ENCODE measurements at regions of chr10 and their contacts with region 1.

Region 1: GRCh38 chr10:68934994-68935393 is 21.0 kb upstream of the DDX21 start:
- DNase-seq: no peak
- ATAC-seq: no peak
- H3K4me3 ChIP-seq: no peak overlapping the region
- H3K4me3 Mint-ChIP-seq: no peak overlapping the region
- H3K27ac ChIP-seq: no peak overlapping the region
- H3K27ac Mint-ChIP-seq: no peak overlapping the region
- H3K4me1 ChIP-seq: no peaks in the 10 kb centered on the region
- H3K4me1 Mint-ChIP-seq: no peaks in the 10 kb centered on the region
- H3K27me3 ChIP-seq: no peaks in the 10 kb centered on the region
- H3K27me3 Mint-ChIP-seq: no peaks in the 10 kb centered on the region
- CTCF ChIP-seq: no peak

Region 2: GRCh38 chr10:68879627-68880026 is 55.4 kb before region 1 on chr10:
- CTCF ChIA-PET with region 1: no interaction called
- POLR2A ChIA-PET with region 1: interaction called, 18 read pairs
- intact Hi-C with region 1: no loop called
- DNase-seq: no peak
- ATAC-seq: no peak
- H3K4me3 ChIP-seq: no peak overlapping the region
- H3K4me3 Mint-ChIP-seq: no peak overlapping the region
- H3K27ac ChIP-seq: no peak overlapping the region
- H3K27ac Mint-ChIP-seq: no peak overlapping the region
- H3K4me1 ChIP-seq: no peaks in the 10 kb centered on the region
- H3K4me1 Mint-ChIP-seq: no peaks in the 10 kb centered on the region
- H3K27me3 ChIP-seq: no peaks in the 10 kb centered on the region
- H3K27me3 Mint-ChIP-seq: no peaks in the 10 kb centered on the region
- CTCF ChIP-seq: no peak

Region 3: GRCh38 chr10:68973975-68974374 is 39.0 kb after region 1 on chr10:
- CTCF ChIA-PET with region 1: no interaction called
- POLR2A ChIA-PET with region 1: no interaction called
- intact Hi-C with region 1: no loop called
- DNase-seq: no peak
- ATAC-seq: no peak
- H3K4me3 ChIP-seq: no peak overlapping the region
- H3K4me3 Mint-ChIP-seq: no peak overlapping the region
- H3K27ac ChIP-seq: no peak overlapping the region
- H3K27ac Mint-ChIP-seq: no peak overlapping the region
- H3K4me1 ChIP-seq: no peaks in the 10 kb centered on the region
- H3K4me1 Mint-ChIP-seq: no peaks in the 10 kb centered on the region
- H3K27me3 ChIP-seq: no peaks in the 10 kb centered on the region
- H3K27me3 Mint-ChIP-seq: no peaks in the 10 kb centered on the region
- CTCF ChIP-seq: no peak

Region 4: DNA sequence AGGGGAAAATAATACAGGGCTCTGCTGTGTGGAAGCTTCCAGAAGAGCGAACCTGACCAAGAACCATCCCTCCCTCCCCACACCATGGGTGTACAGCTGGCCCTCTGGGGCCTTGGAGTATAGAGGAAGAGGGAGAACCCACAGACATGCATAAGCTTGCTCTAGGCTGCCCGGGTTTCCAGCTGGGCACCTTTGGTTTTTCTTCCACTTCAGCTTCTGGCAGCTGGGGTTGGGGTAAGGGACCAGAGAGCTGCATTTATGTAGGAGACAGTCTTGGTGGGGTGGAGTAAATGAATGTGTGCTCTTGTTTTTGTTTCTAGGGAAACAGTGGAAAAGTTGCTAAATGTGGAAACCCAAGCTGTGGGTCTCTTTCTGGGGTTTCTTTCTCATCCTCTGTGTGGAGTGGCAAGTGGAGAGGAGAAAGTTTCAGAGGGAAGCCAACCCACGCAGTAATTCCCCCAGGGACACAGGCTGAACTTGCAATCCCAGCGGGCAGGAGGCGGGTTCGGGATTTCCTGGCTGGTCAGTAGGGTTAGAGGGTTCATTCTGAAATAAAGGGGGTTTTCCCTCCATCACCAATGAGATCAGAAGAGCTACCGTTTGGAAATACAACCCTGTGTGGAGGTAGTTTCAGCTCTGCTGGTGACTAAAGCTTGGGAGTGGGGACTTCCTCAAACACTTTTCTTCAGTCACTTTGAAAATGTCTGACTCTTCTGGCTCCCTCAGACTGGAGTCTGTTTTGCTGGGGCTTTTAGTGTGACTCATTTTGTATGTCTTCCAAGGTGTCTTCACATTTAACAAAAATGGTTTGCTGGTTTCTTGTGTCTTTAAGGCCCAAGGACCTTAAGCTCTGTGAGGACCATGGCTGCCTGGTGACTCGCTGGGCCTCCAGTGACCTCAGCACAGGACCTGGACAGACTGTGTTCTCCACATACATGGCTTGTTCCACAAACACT is 130.7 kb after region 1 on chr10:
- CTCF ChIA-PET with region 1: no interaction called
- POLR2A ChIA-PET with region 1: no interaction called
- intact Hi-C with region 1: no loop called
- DNase-seq: no peak
- ATAC-seq: peak; percentile 32
- H3K4me3 ChIP-seq: no peak overlapping the region
- H3K4me3 Mint-ChIP-seq: no peak overlapping the region
- H3K27ac ChIP-seq: no peak overlapping the region
- H3K27ac Mint-ChIP-seq: peak overlapping the region; percentile 42
- H3K4me1 ChIP-seq: peaks cover 6 to 17% of the 10 kb centered on the region in 2 donors
- H3K4me1 Mint-ChIP-seq: peaks cover 22% of the 10 kb centered on the region
- H3K27me3 ChIP-seq: no peaks in the 10 kb centered on the region
- H3K27me3 Mint-ChIP-seq: no peaks in the 10 kb centered on the region
- CTCF ChIP-seq: no peak

Measured in B cell (primary cell).